HEK293 (cell line): ENCODE measurements at regions of chr19 and their contacts with region 1.

Region 1: DNA sequence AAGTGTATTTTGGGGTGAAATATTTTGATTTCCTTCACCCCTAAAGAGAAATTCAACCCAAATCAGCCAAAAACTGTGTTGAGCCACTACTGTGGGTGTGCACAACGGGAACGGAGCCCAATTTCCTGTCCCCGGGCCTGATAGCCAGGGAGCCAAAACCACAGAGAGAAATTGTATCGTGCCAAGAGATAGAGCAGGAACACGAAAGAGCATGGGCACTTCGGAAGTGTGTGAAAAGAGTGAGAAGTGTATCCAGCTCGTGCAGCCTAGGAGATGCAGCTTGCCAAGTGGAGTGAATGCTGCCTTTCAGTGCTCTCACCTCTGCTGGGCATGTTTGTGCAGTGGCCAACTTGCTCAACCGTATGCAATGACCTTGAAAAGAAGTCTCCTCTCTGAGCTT is 19.4 kb upstream of the PLEKHF1 start:
- H3K4me3 ChIP-seq: no peak overlapping the region
- H3K27ac ChIP-seq: no peak overlapping the region
- H3K4me1 ChIP-seq: peaks cover 7% of the 10 kb centered on the region; the same call in 1 of the 2 replicates
- CTCF ChIP-seq: no peak

Region 2: GRCh38 chr19:29665215-29665825 is 19.4 kb after region 1 on chr19 and contains the start of gene PLEKHF1:
- CTCF ChIA-PET with region 1: interaction called, 15 read pairs
- POLR2A ChIA-PET with region 1: interaction called, 3 read pairs
- H3K4me3 ChIP-seq: peak within 1 kb of the TSS; percentile 59
- H3K27ac ChIP-seq: peak within 1 kb of the TSS; percentile 71; the same call in 1 of the 2 replicates
- H3K4me1 ChIP-seq: peaks cover 52% of the 10 kb centered on the region
- CTCF ChIP-seq: peak; percentile 61; the same call in 1 of the 2 replicates

Region 3: GRCh38 chr19:29687244-29687896 is 41.5 kb after region 1 on chr19:
- CTCF ChIA-PET with region 1: no interaction called
- POLR2A ChIA-PET with region 1: no interaction called
- H3K4me3 ChIP-seq: no peak overlapping the region
- H3K27ac ChIP-seq: no peak overlapping the region
- H3K4me1 ChIP-seq: no peaks in the 10 kb centered on the region
- CTCF ChIP-seq: no peak